ENCODE measurements at regions of chr7 and their contacts with region 1.

Region 1: DNA sequence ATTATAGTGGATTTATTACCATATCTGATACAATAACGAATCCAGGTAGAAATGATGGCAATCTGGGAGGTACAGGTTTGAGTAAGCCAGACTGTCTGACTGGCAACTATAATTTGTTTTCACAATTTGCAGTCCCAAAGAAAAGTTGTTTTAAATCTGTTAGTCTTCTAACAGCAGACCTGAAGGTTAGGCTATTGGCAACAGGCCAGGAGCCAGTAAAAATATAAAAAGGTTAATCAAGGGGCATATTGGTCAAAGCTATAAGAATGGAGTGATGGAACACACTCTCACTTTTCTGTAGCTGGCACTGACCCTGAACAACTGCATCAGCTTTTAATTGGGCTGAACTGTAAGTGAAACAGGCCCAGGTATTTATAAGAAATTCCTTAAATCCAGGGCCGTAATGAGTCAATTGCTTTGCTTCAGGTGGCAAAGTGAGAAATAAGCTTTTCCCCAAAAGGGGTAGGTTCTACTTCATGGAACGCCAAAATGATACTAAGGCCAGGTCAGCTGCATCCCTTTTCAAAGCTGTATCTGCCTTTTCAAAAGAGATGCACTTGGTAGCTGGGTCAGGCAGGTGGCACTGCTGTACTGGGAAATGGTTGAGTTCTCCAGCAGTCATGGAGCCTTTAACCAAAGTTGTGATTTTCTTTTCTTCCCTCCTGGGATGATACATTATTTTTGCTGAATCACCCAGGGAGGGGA is 7.0 kb upstream of the GPR22 start:
- DNase-seq: peak; percentile 60 to 65
- H3K4me3 ChIP-seq: no peak overlapping the region
- H3K27ac ChIP-seq: no peak overlapping the region
- H3K4me1 ChIP-seq: peaks cover 8% of the 10 kb centered on the region
- H3K27me3 ChIP-seq: no peaks in the 10 kb centered on the region
- CTCF ChIP-seq: peak; percentile 90

Region 2: DNA sequence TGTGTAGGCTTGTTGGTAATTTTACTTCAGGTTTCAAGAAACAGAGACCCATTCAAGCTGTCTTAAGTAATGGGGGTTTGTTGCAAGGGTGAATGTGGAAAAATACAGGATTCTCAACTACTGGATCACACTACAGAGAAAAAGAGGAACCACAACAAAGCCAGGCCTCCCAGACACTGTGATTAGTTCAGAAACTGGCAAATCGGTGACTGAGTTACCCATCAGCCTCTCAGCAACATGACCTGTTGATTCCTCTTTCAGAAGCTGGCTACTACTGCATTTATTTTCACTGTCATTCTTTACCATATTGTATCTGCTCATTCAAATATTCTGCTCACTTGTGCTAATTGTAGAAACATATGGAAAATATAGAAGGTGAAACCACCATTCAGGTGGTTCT is 817.9 kb before region 1 on chr7:
- CTCF ChIA-PET with region 1: no interaction called
- POLR2A ChIA-PET with region 1: no interaction called
- intact Hi-C with region 1: no loop called
- DNase-seq: no peak
- H3K4me3 ChIP-seq: no peak overlapping the region
- H3K27ac ChIP-seq: no peak overlapping the region
- H3K4me1 ChIP-seq: no peaks in the 10 kb centered on the region
- H3K27me3 ChIP-seq: no peaks in the 10 kb centered on the region
- CTCF ChIP-seq: no peak

Region 3: DNA sequence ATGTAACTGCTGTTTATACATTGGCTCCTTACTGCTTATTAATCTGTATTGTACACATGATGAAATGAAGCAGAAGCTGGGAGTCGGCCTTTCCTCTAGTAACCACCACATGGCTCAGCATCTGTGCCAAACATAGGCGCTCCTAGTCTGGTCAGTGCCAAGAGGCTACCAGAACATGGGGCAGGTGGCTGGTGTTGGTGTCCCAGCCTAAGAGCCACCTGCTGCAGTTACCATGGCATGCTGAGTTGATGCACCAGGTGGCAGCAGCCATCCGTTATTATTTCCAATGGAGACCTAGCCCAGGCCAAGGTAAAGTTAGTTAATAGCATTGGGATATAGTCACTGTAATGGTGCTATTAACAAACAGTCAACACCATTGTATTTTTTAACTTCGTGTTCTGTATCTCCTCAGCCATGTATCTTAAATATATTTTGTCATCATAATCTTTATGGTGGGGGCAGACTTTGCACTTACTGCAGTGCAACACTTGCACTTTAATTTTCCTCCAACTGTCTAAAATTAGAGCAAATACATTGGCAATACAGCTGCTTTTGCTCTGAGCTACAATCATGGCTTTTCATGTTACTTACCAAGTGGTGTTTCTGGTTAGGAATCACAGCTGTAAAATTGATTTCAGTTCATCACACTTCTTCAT is 261.0 kb before region 1 on chr7:
- CTCF ChIA-PET with region 1: no interaction called
- POLR2A ChIA-PET with region 1: no interaction called
- intact Hi-C with region 1: loop called (anchors 1 kb)
- DNase-seq: peak in 1 of 2 experiments; percentile 55
- H3K4me3 ChIP-seq: no peak overlapping the region
- H3K27ac ChIP-seq: no peak overlapping the region
- H3K4me1 ChIP-seq: no peaks in the 10 kb centered on the region
- H3K27me3 ChIP-seq: no peaks in the 10 kb centered on the region
- CTCF ChIP-seq: peak; percentile 67

Region 4: GRCh38 chr7:107614425-107614824 is 151.5 kb after region 1 on chr7:
- CTCF ChIA-PET with region 1: no interaction called
- POLR2A ChIA-PET with region 1: no interaction called
- intact Hi-C with region 1: no loop called
- DNase-seq: peak in 1 of 2 experiments; percentile 87
- H3K4me3 ChIP-seq: peak overlapping the region; percentile 13; the same call in 1 of the 2 replicates
- H3K27ac ChIP-seq: peak overlapping the region; percentile 48
- H3K4me1 ChIP-seq: peaks cover 44% of the 10 kb centered on the region
- H3K27me3 ChIP-seq: no peaks in the 10 kb centered on the region
- CTCF ChIP-seq: no peak